ENCODE measurements at regions of chr17 and their contacts with region 1.

Region 1: DNA sequence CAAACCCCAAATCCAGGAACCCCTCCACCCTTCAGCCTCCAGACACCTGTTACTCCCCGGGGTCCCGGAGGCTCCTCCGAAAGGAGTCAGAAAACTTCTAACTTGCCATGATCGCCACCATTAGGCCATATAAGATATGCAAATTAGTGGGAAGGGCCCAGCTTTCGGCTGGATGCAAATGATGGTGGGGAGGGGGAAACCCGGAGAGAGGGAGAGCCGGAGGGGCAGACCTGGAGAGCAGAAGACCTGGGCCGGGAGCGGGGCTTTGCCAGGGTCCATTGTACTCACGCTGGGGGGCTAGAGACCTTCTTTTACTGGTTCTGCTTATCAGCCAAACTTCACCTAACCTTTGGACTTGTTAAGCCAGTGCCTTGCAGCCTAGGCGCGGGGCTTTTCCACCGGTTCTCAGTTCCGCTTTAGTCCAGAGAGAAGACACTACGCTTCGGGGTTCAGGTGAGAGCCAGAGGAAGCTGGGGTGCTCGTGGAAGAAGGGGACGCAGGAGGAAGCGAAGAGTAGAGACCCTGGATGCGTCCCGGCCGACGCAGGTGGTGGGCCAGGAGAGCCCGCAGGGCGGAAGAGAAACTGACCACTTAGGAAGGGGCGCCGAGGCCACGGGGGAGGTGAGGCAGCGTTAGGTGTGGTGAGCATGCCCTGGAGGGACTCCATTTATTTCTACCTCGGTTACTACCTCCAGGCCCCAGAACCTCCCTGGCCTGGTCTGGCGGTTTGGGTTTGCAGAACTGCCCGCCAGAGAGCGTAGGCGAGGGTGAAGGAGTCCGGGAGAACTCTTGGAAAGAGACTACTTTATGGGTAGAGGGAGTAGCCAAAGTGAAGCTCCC is at the start of gene HNF1B:
- DNase-seq: peak; percentile 53
- H3K4me3 Mint-ChIP-seq: peak within 1 kb of the TSS; percentile 36
- H3K27ac Mint-ChIP-seq: no peak within 1 kb of the TSS
- H3K4me1 Mint-ChIP-seq: peaks cover 21% of the 10 kb centered on the region
- H3K27me3 Mint-ChIP-seq: peaks cover 66% of the 10 kb centered on the region
- total RNA-seq, gene HNF1B: not detected

Region 2: DNA sequence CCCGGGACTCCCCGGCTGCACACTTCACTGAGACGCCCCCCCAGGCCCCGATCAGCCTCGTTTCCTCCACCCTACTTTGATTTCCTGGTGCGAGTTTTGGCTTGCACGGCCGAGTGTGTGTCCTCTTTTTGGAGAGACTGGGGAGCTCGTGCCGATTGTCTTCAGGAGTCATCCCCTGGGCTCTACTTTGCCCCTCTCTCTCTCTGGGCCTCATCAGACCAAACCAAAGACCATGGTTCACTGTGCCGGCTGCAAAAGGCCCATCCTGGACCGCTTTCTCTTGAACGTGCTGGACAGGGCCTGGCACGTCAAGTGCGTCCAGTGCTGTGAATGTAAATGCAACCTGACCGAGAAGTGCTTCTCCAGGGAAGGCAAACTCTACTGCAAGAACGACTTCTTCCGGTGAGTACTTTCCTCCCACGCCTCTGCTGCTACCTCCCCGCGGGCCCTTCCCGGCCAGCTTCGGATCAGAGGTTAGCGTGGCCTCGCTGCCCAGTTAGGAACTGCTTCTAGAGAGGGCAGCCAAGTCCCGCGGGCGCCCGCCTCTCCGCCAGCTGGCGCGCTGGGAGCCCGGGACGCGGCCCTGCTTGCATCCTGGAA is 807.1 kb before region 1 on chr17:
- CTCF ChIA-PET with region 1: no interaction called
- intact Hi-C with region 1: loop called (anchors 10 kb)
- DNase-seq: peak; percentile 48
- H3K4me3 Mint-ChIP-seq: peak overlapping the region; percentile 59
- H3K27ac Mint-ChIP-seq: no peak overlapping the region
- H3K4me1 Mint-ChIP-seq: peaks cover 62% of the 10 kb centered on the region
- H3K27me3 Mint-ChIP-seq: peaks cover 77% of the 10 kb centered on the region

Region 3: GRCh38 chr17:37844158-37844976 is 99.2 kb after region 1 on chr17:
- CTCF ChIA-PET with region 1: no interaction called
- intact Hi-C with region 1: no loop called
- DNase-seq: peak; percentile 72
- H3K4me3 Mint-ChIP-seq: no peak overlapping the region
- H3K27ac Mint-ChIP-seq: no peak overlapping the region
- H3K4me1 Mint-ChIP-seq: peaks cover 19% of the 10 kb centered on the region
- H3K27me3 Mint-ChIP-seq: peaks cover 6% of the 10 kb centered on the region

Measured in activated naive CD4-positive, alpha-beta T cell treated with anti-CD3 and anti-CD28 coated beads for 36 hours (primary cell).